Heart right ventricle (tissue), 16 donors: ENCODE measurements at regions of chr2 and their contacts with region 1.

Region 1: DNA sequence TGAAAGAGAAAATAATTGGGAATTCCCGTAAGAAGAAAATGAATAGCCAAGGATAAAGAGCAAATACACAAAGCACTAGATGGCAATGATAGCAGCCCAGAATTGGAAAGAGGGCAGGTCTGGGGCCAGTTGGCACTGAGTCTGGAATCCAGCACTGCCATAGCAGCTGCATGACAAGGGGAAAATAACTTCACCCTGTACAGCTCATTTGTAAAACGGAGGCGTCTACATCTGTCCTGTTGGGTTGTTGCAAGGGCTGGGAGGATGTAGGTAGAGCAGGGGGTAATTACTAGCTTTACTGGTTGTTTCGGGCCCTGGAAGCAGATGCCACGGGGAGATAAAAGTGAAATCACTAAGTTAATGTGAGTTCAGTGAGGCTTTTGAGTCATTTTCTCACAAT is 110.0 kb upstream of the RASGRP3 start:
- DNase-seq: peak; percentile 35 to 47
- ATAC-seq: peak; percentile 86 to 96 (median 92)
- H3K4me3 ChIP-seq: no peak overlapping the region
- H3K27ac ChIP-seq: peak overlapping the region in 6 of 10 donors; percentile 8 to 63 (median 48)
- H3K4me1 ChIP-seq: peaks cover 0 to 23% (median 3%) of the 10 kb centered on the region in 9 donors
- H3K27me3 ChIP-seq: no peaks in the 10 kb centered on the region
- CTCF ChIP-seq: no peak

Region 2: GRCh38 chr2:33304032-33304864 is 62.2 kb before region 1 on chr2:
- intact Hi-C with region 1: loop called in 1 of 10 experiments (anchors 5 kb)
- DNase-seq: no peak
- ATAC-seq: peak in 6 of 8 donors; percentile 34 to 74 (median 68)
- H3K4me3 ChIP-seq: no peak overlapping the region
- H3K27ac ChIP-seq: peak overlapping the region in 9 of 10 donors; percentile 18 to 68 (median 55)
- H3K4me1 ChIP-seq: peaks cover 0 to 12% (median 6%) of the 10 kb centered on the region in 9 donors
- H3K27me3 ChIP-seq: no peaks in the 10 kb centered on the region
- CTCF ChIP-seq: no peak